Endothelial cell of umbilical vein (primary cell): ENCODE measurements at regions of chr3 and their contacts with region 1.

Region 1: DNA sequence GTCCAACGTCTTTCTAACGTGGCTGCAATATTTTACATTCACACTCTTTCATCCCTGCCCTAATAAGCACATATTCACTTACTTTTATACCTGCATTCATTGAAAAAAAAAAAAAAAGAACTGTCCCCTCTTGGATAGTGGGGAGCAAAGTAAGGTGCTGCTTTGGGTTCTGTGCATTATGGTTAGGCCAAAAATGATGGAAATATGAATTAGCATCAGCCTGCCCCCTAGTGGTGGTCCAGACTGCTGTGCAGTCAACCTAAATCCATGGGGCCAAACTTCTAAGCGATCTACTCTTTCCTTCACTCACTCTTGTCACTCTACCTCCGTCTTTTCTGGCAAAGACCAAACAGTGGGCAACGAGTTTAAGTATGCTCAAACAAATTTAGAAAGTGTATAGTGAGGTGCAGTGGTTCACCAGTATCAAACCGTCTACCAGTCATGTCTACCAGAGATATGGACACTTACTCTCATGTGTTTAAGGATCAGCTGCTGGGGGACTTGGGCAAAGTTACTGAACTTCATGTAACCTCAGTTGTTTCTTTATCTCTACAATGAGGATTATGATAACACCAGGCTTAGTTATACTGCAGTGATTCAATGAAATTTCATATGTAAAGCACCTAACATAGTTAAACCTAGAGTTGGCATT is 61.5 kb upstream of the GRM7 start:
- DNase-seq: peak; percentile 1
- H3K4me3 ChIP-seq: no peak overlapping the region
- H3K27ac ChIP-seq: no peak overlapping the region
- H3K4me1 ChIP-seq: no peaks in the 10 kb centered on the region
- H3K27me3 ChIP-seq: no peaks in the 10 kb centered on the region
- CTCF ChIP-seq: peak; percentile 60 to 67
- POLR2A ChIP-seq: no peak

Region 2: DNA sequence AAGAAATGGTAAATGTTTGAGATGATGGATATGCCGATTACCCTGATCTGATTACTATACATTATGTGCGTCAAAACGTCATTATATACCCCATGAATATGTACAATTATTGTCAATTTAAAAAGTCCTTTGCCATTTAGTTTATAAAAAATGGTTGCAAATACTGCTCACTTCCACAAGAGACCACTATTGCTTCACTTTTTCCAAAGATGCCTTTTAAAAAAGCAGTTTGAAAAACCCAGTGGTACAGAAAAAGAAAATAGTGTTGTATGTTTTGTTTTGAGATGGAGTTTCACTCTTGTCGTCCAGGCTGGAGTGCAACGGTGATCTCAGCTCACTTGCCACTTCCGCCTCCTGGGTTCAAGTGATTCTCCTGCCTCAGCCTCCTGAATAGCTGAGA is 1572.6 kb before region 1 on chr3:
- CTCF ChIA-PET with region 1: no interaction called
- POLR2A ChIA-PET with region 1: no interaction called
- dilution Hi-C with region 1: no loop called
- intact Hi-C with region 1: loop called (anchors 2 kb)
- DNase-seq: peak; percentile 24
- H3K4me3 ChIP-seq: no peak overlapping the region
- H3K27ac ChIP-seq: no peak overlapping the region
- H3K4me1 ChIP-seq: no peaks in the 10 kb centered on the region
- H3K27me3 ChIP-seq: no peaks in the 10 kb centered on the region
- CTCF ChIP-seq: peak in 1 of 2 donors; percentile 17
- POLR2A ChIP-seq: no peak

Region 3: GRCh38 chr3:5304789-5305683 is 1494.4 kb before region 1 on chr3:
- CTCF ChIA-PET with region 1: no interaction called
- POLR2A ChIA-PET with region 1: no interaction called
- dilution Hi-C with region 1: no loop called
- intact Hi-C with region 1: loop called (anchors 5 kb)
- DNase-seq: peak; percentile 16
- H3K4me3 ChIP-seq: no peak overlapping the region
- H3K27ac ChIP-seq: no peak overlapping the region
- H3K4me1 ChIP-seq: no peaks in the 10 kb centered on the region
- H3K27me3 ChIP-seq: no peaks in the 10 kb centered on the region
- CTCF ChIP-seq: peak; percentile 29 to 43
- POLR2A ChIP-seq: no peak

Region 4: DNA sequence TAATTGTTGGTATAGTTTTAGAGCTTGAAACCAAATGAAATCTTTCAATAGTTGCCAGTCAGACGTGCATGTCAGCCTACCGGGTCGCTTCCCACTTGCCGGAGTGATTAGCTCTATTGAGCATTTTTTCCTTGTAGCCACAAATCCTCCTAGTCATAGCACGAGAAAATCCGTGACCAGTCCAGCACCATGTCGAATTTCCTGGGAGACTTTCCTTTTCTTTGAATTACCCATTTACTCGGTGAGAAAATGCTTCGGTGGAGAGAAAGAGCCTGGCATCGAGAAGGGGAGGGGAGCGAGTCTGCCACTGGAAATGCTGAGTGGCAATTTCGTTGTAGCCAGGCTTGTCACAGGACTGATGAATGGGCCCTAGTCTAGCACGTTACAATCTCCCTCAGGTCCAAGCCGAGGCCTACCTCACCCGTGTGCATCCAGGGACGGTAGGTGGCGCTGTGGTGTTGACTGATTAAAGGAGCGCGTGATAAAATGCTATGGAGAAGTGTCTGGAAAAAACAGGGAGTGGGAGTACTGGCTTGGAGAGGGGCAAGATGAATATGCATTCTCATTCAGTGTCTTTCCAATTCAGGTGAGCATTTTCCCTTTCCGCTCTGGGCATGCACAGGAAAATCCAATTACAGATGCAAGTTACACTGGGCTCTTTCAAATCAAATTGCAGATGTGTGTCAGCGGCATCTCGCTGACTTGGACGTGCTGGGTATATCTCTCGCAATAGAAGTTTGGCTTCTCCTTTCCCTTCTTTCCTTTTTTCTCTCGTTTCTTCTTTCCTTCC is 1373.1 kb before region 1 on chr3:
- CTCF ChIA-PET with region 1: interaction called, 3 read pairs
- POLR2A ChIA-PET with region 1: no interaction called
- dilution Hi-C with region 1: no loop called
- intact Hi-C with region 1: loop called (anchors 1 kb)
- DNase-seq: peak; percentile 45
- H3K4me3 ChIP-seq: no peak overlapping the region
- H3K27ac ChIP-seq: no peak overlapping the region
- H3K4me1 ChIP-seq: no peaks in the 10 kb centered on the region
- H3K27me3 ChIP-seq: no peaks in the 10 kb centered on the region
- CTCF ChIP-seq: peak; percentile 78 to 85
- POLR2A ChIP-seq: no peak